ENCODE measurements at regions of chr11 and their contacts with region 1.

Region 1: DNA sequence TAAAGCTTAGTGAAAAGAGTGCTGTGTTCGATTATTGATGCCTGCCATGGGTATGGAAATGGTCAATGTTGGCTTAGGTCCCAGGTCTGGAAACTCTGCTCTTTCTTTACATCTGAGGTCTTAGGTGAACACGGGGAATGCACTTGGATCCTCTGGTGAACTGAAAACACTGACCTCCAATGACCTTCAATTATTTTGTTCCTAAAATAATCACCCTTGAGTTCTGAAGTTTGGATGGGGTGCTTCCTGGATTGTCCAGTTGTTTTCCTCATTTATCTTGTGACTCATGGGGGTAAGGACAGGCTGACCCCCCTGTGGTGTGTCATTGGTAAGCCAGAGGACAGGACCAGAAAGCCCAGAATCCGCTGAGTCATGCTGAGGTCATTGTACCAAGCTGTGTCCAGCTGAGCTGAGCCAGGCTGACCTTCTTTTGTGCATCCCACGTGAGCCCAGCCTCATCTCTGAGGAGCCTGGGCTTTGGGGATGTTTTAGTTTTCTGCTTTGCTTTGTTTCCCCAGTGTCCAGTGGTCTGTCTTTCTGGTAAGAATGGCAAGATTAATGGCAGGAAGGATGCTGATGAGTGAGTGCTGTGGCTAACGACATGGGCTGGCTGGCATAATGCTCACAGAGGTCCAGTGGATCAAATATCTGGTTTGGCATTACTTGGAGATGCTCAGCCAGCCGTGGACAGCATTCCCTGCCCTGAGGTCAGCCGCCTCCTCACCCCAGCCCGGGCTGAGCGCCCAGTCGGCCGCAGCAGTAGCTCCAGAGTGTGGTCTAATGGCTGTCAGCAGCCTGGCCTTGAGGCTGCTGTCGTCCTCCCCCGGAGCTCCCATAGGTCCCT is 35.6 kb downstream of the AMPD3 start:
- DNase-seq: peak; percentile 99
- ATAC-seq: peak; percentile 92
- H3K4me3 ChIP-seq: no peak overlapping the region
- H3K27ac ChIP-seq: peak overlapping the region; percentile 88
- H3K4me1 ChIP-seq: peaks cover 22% of the 10 kb centered on the region
- H3K27me3 ChIP-seq: no peaks in the 10 kb centered on the region
- CTCF ChIP-seq: no peak
- POLR2A ChIP-seq: no peak
- RAD21 ChIP-seq: no peak; the same call in 1 of the 2 replicates

Region 2: GRCh38 chr11:10351768-10352641 is 138.6 kb before region 1 on chr11:
- CTCF ChIA-PET with region 1: no interaction called
- POLR2A ChIA-PET with region 1: no interaction called
- dilution Hi-C with region 1: no loop called
- in situ Hi-C with region 1: no loop called
- intact Hi-C with region 1: loop called (anchors 2 kb)
- DNase-seq: peak; percentile 95
- ATAC-seq: peak; percentile 87
- H3K4me3 ChIP-seq: no peak overlapping the region
- H3K27ac ChIP-seq: peak overlapping the region; percentile 74
- H3K4me1 ChIP-seq: peaks cover 23% of the 10 kb centered on the region
- H3K27me3 ChIP-seq: no peaks in the 10 kb centered on the region
- CTCF ChIP-seq: no peak
- POLR2A ChIP-seq: no peak
- RAD21 ChIP-seq: no peak

Region 3: DNA sequence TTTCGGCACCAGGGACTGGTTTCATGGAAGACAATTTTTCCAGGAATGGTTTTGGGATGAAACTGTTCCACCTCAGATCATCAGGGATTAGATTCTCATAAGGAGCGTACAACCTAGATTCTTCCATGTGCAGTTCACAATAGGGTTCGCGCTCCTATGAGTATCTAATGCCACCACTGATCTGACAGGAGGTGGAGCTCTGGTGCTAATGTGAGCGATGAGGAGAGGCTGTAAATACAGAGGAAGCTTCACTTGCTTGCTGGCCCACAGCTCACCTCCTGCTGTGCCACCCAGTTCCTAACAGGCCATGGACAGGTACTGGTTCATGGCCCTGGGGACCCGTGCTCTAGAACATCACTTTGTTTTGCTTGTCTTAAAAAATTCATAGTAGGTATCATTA is 77.4 kb before region 1 on chr11:
- CTCF ChIA-PET with region 1: no interaction called
- POLR2A ChIA-PET with region 1: no interaction called
- dilution Hi-C with region 1: no loop called
- in situ Hi-C with region 1: loop called (anchors 5 kb)
- intact Hi-C with region 1: no loop called
- DNase-seq: peak; percentile 22
- ATAC-seq: peak; percentile 66
- H3K4me3 ChIP-seq: no peak overlapping the region
- H3K27ac ChIP-seq: no peak overlapping the region
- H3K4me1 ChIP-seq: peaks cover 11% of the 10 kb centered on the region
- H3K27me3 ChIP-seq: no peaks in the 10 kb centered on the region
- CTCF ChIP-seq: peak; percentile 30; the same call in 1 of the 2 replicates
- POLR2A ChIP-seq: no peak
- RAD21 ChIP-seq: peak; percentile 45

Region 4: DNA sequence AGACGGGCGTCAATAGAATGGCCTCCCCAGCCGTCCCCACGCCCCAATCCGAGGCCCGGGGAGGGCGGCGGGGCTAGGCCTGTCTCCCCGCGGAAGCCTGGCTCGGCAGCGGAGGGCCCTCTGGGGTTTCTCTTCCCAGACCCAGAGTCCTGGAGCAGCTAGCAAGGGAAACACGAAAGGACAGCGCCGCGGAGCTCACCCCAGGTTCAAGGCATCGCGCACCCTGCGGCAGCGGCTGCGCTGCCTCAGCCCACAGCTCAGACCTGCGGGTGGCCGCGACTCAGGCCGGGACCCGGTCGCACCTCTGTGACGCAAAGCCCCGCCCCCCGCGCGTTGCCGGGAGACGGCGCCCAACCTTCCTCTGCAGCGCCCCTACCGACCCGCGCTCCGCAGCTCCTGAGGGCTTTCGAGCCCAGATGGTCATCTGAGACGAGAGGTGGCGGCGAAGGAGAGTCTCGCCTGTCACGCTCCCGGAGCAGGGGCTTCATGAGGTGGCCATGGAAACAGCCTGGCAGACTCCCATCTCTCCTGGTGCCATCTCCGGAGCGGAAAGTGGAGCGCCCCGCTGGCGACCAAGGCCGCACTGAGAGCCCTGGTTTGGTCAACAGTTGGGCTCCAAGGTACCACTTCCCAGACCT is 50.4 kb after region 1 on chr11 and contains the start of gene RNF141:
- CTCF ChIA-PET with region 1: no interaction called
- POLR2A ChIA-PET with region 1: no interaction called
- dilution Hi-C with region 1: no loop called
- in situ Hi-C with region 1: no loop called
- intact Hi-C with region 1: no loop called
- DNase-seq: peak; percentile 87
- ATAC-seq: peak; percentile 99
- H3K4me3 ChIP-seq: peak within 1 kb of the TSS; percentile 77
- H3K27ac ChIP-seq: peak within 1 kb of the TSS; percentile 79
- H3K4me1 ChIP-seq: peaks cover 2% of the 10 kb centered on the region
- H3K27me3 ChIP-seq: no peaks in the 10 kb centered on the region
- CTCF ChIP-seq: peak; percentile 86
- POLR2A ChIP-seq: peak; percentile 92
- RAD21 ChIP-seq: peak; percentile 49
- total RNA-seq, gene RNF141: 18.6 and 34.2 TPM in 2 replicates

Measured in IMR-90 (cell line).